ENCODE measurements at regions of chr3 and their contacts with region 1.

Region 1: DNA sequence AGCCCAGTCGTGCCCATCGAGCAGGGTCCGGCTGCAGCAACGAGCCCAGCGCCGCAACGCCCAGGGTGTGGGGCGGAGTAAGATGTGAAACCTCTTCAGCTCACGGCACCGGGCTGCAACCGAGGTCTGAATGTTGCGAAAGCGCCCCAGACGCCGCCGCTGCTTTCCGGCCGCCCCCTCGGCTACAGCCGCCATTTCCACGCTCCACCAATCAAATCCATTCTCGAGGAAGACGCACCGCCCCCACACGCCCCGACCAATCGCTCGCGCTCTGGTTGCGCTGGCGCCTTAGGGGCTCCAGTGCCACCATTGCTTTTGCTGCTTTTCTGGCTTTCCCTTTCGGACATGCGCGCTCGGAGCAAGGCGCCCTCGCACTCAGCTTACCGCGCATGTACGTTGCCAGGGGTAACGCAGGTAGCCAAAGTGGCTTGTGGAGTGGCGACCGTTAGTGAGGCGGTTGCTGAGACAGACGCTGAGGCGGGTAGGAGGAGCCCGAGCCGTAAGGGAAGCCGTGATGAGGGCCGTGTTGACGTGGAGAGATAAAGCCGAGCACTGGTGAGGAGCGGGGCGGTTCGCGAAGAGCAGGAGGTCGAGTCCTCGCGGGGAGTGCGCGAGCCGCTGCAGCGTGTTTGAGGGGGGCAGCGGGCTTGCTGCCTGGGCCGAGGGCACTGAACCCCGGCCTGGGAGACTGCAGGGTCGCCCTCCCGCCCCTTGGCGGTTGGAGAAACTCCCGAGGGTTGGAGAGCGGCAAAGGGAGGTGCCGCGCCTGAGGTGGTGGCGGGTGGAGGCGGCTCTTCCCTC is at the starts of genes IFT122 and MBD4:
- DNase-seq: peak; percentile 94 to 99
- H3K4me3 ChIP-seq: peak within 1 kb of the TSS; percentile 84 to 96
- H3K27ac ChIP-seq: peak within 1 kb of the TSS; percentile 84 to 85
- H3K4me1 ChIP-seq: peaks cover 16 to 36% of the 10 kb centered on the region in 2 donors
- H3K27me3 ChIP-seq: no peaks in the 10 kb centered on the region
- CTCF ChIP-seq: no peak
- total RNA-seq, gene IFT122: 51.1 TPM
- total RNA-seq, gene MBD4: 57.6 TPM

Region 2: GRCh38 chr3:129399145-129399894 is 40.7 kb before region 1 on chr3:
- intact Hi-C with region 1: loop called (anchors 2 kb)
- DNase-seq: peak; percentile 16 to 91
- H3K4me3 ChIP-seq: peak overlapping the region; percentile 52 to 78
- H3K27ac ChIP-seq: peak overlapping the region; percentile 77 to 88
- H3K4me1 ChIP-seq: peaks cover 0 to 8% of the 10 kb centered on the region in 2 donors
- H3K27me3 ChIP-seq: no peaks in the 10 kb centered on the region
- CTCF ChIP-seq: peak; percentile 74 to 88 (median 82)

Region 3: DNA sequence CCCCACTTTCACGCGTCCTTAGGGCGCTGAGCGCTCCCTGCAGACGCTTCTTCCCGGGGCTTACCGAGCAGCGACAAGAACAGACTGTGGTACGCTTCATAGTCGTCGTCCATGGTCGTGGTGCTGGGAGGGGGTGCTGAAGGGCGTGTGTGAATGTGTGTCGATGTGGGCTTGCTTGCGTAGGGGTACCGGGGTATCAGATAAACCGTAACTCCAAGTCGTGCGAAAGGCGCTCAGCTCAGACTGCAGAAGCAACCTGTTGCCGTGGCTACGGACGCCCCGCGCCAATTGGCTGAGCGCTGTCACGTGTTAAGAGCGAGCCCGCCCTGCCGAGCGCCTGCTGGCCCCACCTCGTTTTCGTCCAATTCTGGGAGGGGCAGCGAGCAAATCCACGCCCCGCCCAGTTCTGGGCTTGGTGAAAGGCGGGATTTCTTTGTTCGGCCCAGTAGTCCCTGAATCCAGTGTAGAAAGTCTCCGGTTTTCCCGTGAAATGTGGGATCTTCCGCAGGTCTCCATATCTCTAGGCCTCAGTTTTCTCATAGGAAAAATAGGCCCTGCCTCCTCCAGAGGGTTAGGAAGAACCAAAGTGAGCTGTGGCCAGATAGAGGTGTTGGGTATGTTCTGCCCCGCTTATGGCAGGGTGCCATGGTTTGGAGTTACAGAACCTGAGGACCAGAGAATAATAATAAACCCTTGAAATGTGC is 11.5 kb before region 1 on chr3 and contains the start of gene EFCAB12:
- intact Hi-C with region 1: loop called (anchors 1 kb)
- DNase-seq: peak; percentile 83 to 97
- H3K4me3 ChIP-seq: peak within 1 kb of the TSS; percentile 55 to 61
- H3K27ac ChIP-seq: peak within 1 kb of the TSS; percentile 49 to 52
- H3K4me1 ChIP-seq: peaks cover 0 to 6% of the 10 kb centered on the region in 2 donors
- H3K27me3 ChIP-seq: no peaks in the 10 kb centered on the region
- CTCF ChIP-seq: no peak
- total RNA-seq, gene EFCAB12: not detected

Region 4: DNA sequence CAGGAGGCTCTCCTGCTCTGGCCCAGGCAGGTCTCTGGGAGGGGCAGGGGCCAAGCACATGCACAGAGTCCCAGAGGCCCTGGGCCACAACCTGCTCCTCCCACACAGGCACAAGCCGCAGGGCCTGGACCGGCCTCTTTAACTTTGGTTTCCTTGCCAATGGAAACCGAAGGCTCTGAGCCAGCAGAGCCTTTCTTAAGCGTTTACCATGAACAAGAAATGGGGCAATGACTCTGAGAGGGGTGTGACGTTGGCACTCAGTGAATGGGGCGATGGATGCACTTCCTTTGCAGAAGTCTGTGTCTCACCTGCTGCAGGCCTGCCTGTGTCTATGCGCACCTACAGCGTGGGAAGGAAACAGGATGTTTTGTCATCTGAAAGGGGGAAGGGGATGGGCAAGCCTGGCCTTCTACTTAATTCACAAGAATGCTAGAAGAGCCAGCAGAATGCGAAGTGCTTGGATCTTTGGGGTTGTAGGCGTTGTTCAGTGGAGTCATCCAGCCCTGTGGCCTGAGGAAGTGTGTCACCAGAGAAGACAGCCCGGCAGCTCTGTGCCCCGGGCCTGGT is 41.8 kb after region 1 on chr3:
- intact Hi-C with region 1: loop called (anchors 5 kb)
- DNase-seq: peak in 1 of 2 donors; percentile 79
- H3K4me3 ChIP-seq: no peak overlapping the region
- H3K27ac ChIP-seq: peak overlapping the region in 1 of 2 donors; percentile 54
- H3K4me1 ChIP-seq: peaks cover 12 to 17% of the 10 kb centered on the region in 2 donors
- H3K27me3 ChIP-seq: no peaks in the 10 kb centered on the region
- CTCF ChIP-seq: no peak

Region 5: DNA sequence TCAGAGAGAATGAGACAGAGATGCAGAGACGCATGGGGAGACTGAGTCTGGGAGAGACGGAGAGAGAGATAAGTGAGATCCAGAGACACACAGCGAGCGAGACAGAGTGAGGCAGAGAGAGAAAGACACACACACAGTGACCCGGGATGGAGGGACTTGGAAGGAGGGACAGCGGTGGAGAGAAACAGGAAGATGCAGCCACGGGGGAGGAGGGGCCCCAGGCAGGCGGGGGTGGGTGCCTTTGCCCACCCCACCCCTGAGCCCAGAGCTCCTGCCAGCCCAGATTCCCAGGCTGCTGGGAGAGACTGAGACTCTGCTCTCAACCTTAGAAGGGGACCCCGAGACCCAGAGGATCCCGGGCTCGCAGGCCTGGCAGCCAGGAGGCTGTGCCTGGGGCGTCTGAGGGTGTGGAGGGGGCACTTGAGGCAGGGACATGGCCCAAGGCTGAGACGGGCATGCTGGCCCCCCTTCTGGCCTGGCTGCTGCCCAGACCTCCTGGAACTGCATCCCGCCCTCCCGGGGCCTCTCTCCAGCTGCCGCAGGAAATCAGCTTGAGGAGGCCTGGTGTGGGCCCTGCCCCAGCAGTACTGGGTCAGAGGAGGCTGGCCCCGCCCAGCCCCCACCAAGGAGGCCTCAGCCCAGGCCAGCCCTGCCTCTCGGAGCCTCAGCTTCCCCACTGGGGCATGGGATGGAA is 121.0 kb after region 1 on chr3:
- intact Hi-C with region 1: loop called (anchors 5 kb)
- DNase-seq: peak; percentile 69 to 93
- H3K4me3 ChIP-seq: peak overlapping the region; percentile 6 to 57
- H3K27ac ChIP-seq: peak overlapping the region; percentile 91 to 93
- H3K4me1 ChIP-seq: peaks cover 29 to 64% of the 10 kb centered on the region in 2 donors
- H3K27me3 ChIP-seq: no peaks in the 10 kb centered on the region
- CTCF ChIP-seq: no peak